ENCODE measurements at regions of chr1 and their contacts with region 1.

Region 1: DNA sequence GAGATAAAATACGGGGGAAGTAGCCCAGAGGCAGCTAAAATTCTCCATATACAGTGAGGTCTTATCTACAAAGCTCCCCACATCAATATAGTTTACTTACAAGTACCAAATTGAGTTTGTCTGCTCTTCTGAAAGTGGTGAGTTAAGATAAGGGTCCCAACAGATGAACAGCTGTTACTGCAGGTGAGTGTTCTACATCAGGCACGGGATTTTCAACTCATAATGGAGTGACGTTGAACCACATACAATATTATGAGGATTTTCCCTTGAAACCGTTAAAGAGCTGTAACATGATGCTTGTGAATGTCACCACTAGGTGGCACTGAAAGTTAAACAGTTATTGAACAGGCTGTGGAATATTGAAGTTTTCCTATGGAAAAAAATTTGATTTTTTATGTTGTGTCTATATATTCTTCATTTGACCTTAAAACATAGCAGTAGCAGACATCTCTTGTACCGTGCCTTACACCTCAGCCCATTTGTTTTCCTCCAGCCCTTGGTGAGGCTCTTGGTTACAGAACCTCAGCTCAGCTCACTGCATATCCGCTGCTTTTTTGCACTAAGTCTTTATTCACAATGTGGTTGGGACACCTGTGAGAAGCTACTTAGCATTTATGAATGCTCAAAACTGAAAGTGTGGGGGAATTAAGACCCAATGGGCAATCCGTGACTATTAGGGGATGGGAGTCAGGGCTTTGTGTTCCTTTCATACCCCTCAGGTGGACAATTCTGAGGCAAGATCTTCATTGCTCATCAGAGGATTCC is 23.2 kb downstream of the CD1D start:
- DNase-seq: no peak
- H3K4me3 ChIP-seq: no peak overlapping the region
- H3K27ac ChIP-seq: no peak overlapping the region
- H3K4me1 ChIP-seq: peaks cover 0 to 10% (median 0%) of the 10 kb centered on the region in 4 donors
- H3K27me3 ChIP-seq: peaks cover 0 to 17% (median 0%) of the 10 kb centered on the region in 4 donors
- CTCF ChIP-seq: peak; percentile 57 to 79 (median 79)
- EP300 ChIP-seq: no peak
- POLR2A ChIP-seq: no peak

Region 2: GRCh38 chr1:158998781-158999161 is 794.9 kb after region 1 on chr1:
- intact Hi-C with region 1: loop called (anchors 5 kb)
- DNase-seq: no peak
- H3K4me3 ChIP-seq: peak overlapping the region; percentile 38 to 60 (median 48)
- H3K27ac ChIP-seq: peak overlapping the region; percentile 62 to 85 (median 76)
- H3K4me1 ChIP-seq: peaks cover 9 to 18% (median 11%) of the 10 kb centered on the region in 4 donors
- H3K27me3 ChIP-seq: peaks cover 0 to 18% (median 0%) of the 10 kb centered on the region in 4 donors
- CTCF ChIP-seq: peak; percentile 76 to 89 (median 87)
- EP300 ChIP-seq: no peak
- POLR2A ChIP-seq: no peak

Region 3: GRCh38 chr1:159071970-159072582 is 868.2 kb after region 1 on chr1:
- intact Hi-C with region 1: loop called (anchors 5 kb)
- DNase-seq: no peak
- H3K4me3 ChIP-seq: no peak overlapping the region
- H3K27ac ChIP-seq: no peak overlapping the region
- H3K4me1 ChIP-seq: no peaks in the 10 kb centered on the region
- H3K27me3 ChIP-seq: peaks cover 0 to 13% (median 0%) of the 10 kb centered on the region in 4 donors
- CTCF ChIP-seq: peak; percentile 55 to 71 (median 56)
- EP300 ChIP-seq: no peak
- POLR2A ChIP-seq: no peak

Measured in esophagus muscularis mucosa (tissue), 4 donors.